Activated CD8-positive, alpha-beta memory T cell treated with anti-CD3 and anti-CD28 coated beads, Interleukin-2, amount 10 ng/mL, durations not matched to agents 7 days and 5 days (primary cell): ENCODE measurements at regions of chr12 and their contacts with region 1.

Region 1: GRCh38 chr12:96399919-96400797 is at the start of gene CDK17:
- DNase-seq: peak; percentile 92
- ATAC-seq: peak; percentile 71
- H3K4me3 Mint-ChIP-seq: peak within 1 kb of the TSS; percentile 89
- H3K27ac Mint-ChIP-seq: peak within 1 kb of the TSS; percentile 98
- H3K4me1 Mint-ChIP-seq: peaks cover 42% of the 10 kb centered on the region
- H3K27me3 Mint-ChIP-seq: no peaks in the 10 kb centered on the region
- total RNA-seq, gene CDK17: 32.7 to 46.9 TPM

Region 2: DNA sequence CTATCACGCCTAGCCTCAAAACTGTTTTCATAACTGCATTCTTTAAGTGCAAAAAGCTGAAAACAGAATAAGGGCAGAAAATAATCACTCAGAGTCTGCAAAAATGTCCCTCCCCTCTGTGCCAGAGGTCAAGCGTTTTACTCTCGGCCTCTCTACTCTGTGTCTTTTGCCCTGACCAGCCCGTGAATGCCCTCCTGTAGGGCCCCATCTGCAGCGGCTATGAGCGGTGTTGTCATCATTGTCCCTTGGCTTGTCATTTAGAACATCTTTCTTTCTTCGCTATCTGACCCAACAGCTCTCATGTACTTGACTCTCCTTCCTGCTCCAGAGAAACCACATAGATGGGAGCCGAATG is 184.3 kb before region 1 on chr12:
- CTCF ChIA-PET with region 1: interaction called, 25 read pairs
- DNase-seq: no peak
- ATAC-seq: no peak
- H3K4me3 Mint-ChIP-seq: no peak overlapping the region
- H3K27ac Mint-ChIP-seq: no peak overlapping the region
- H3K4me1 Mint-ChIP-seq: peaks cover 37% of the 10 kb centered on the region
- H3K27me3 Mint-ChIP-seq: no peaks in the 10 kb centered on the region

Region 3: GRCh38 chr12:96335270-96335669 is 64.9 kb before region 1 on chr12:
- CTCF ChIA-PET with region 1: no interaction called
- DNase-seq: no peak
- ATAC-seq: peak; percentile 68
- H3K4me3 Mint-ChIP-seq: peak overlapping the region; percentile 11
- H3K27ac Mint-ChIP-seq: peak overlapping the region; percentile 67
- H3K4me1 Mint-ChIP-seq: peaks cover 24% of the 10 kb centered on the region
- H3K27me3 Mint-ChIP-seq: no peaks in the 10 kb centered on the region

Region 4: GRCh38 chr12:96383991-96384390 is 16.2 kb before region 1 on chr12:
- CTCF ChIA-PET with region 1: interaction called, 22 read pairs
- DNase-seq: no peak
- ATAC-seq: no peak
- H3K4me3 Mint-ChIP-seq: no peak overlapping the region
- H3K27ac Mint-ChIP-seq: no peak overlapping the region
- H3K4me1 Mint-ChIP-seq: peaks cover 53% of the 10 kb centered on the region
- H3K27me3 Mint-ChIP-seq: no peaks in the 10 kb centered on the region

Region 5: DNA sequence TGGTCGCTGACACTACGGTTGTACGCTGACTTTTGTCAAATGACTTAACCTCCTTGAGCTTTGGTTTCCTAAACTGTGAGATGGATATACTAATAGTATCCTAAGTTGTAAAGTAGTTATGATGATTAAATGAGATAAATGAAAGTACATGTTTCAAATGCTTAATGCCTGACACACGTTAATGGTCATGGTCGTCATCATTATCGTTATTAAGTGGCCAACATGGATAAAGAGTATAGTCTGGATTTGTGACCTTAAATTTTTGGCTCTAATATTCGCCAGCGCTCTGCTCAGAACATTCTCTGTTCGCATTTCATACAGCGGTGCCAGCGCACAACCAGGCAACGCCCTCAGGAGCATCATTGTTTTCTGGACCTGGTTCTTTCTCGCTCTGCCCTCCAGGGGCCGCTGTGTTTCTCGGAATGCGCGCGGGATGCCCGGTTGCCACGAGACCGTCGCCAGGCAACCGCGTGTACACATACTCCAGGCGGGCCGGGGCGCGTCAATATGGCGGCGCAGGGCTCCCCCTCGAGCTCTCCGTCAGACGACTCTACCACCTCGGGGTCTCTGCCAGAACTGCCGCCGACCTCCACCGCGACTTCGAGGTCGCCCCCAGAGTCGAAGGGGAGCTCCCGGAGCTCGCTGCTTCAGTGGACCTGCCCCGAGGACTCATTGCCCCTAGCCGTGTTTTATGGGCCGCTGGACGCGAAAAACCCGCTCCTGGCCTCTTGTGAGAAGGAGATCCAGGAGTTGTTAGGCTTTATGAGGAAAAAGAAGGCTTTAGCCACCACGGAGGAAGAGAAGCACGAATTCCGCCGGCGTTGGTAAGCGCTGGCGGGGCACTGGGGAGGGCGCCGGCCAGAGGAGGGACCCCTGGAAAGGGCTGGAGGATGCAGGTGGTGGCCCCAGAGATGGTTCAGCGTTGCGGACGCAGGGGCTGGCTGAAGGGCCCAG is 89.2 kb after region 1 on chr12 and contains the start of gene CFAP54:
- CTCF ChIA-PET with region 1: interaction called, 16 read pairs
- DNase-seq: peak; percentile 96
- ATAC-seq: peak; percentile 87
- H3K4me3 Mint-ChIP-seq: peak within 1 kb of the TSS; percentile 84
- H3K27ac Mint-ChIP-seq: peak within 1 kb of the TSS; percentile 77
- H3K4me1 Mint-ChIP-seq: peaks cover 35% of the 10 kb centered on the region
- H3K27me3 Mint-ChIP-seq: peaks cover 20% of the 10 kb centered on the region
- total RNA-seq, gene CFAP54: 0.33 to 1.4 TPM

Region 6: DNA sequence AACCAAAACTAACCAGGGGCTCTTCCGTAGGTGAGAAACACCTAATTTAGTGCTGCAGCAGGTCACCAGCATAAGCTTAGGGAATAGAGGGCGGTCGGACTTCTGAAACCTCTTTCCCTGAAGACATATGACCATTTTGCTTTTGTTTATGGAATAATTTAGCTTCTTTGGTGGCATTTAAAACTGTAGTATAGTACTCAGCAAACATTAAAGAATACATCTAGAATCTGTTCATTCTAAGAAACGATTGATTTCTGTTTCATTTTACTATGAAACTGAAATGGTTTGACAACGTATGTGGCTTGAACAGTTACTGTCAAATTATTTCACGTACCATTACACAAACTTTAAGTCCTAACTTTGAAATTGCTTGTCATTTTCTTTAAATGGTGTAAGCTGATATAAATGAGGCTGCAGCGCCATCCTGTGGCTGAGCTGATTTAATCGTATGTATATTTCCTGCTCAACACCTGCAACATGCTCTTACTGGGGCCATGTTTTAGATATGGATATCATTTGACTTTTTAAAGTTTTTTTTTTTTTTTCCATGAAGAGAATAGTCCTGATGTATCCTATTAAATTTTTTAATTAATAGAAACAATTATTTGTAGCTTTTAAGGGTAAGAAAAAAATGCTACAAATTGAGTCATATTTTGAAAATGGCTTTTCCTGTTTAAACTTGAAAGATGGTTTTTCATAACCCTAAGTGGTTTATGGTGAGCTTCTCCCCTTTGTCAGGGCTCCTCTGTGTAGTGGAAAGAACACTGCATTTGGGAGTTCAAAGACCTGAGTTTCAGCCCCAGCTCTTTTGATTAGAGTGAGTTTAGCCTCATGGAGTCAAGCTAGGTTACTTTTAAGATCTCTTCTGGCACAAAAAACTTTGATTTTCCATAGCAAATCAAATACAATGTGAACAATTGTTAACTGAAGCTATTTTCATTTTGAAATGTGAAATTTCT is 116.6 kb after region 1 on chr12:
- CTCF ChIA-PET with region 1: interaction called, 56 read pairs
- DNase-seq: peak; percentile 94
- ATAC-seq: peak; percentile 91
- H3K4me3 Mint-ChIP-seq: peak overlapping the region; percentile 53
- H3K27ac Mint-ChIP-seq: peak overlapping the region; percentile 80
- H3K4me1 Mint-ChIP-seq: peaks cover 21% of the 10 kb centered on the region
- H3K27me3 Mint-ChIP-seq: no peaks in the 10 kb centered on the region